CD14-positive monocyte (primary cell): ENCODE measurements at regions of chr3 and their contacts with region 1.

Region 1: DNA sequence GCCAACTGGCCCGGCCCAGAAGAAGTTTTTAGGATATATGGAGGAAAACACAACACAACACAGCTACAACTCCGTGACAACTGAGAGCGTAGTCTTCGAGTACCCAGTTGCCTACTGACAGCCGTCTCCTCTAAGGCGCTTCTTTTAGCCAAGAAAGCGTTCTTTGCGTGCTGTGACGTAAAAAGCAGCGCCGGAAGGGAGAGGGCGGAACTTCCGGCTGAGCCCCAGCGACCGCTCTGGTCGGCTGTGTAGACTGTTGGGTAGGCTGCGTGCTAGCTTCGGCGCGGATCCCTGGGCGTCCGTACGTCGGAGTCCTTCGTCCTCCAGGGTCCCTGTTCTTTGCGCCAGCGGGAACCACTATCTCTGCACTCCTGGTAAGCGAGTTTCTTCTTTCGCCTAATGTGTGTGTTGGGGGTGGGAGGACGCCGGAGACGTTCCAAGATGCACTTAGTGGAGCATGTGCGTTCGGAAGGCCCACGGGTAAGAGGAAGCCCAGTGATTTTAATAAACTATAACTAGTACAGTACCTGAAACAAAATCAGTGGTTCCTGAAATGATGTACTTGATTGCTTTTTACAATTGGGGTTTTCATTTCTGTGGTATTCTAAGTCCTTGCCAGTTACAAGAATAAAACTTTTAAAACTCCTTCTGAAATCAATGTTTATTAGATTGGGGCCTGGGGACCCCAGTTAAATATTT is at the start of gene TRMT10C:
- DNase-seq: peak; percentile 91 to 94 (median 92)
- H3K4me3 ChIP-seq: peak within 1 kb of the TSS; percentile 77 to 91 (median 81)
- H3K4me3 Mint-ChIP-seq: peak within 1 kb of the TSS; percentile 93 to 97
- H3K27ac ChIP-seq: peak within 1 kb of the TSS; percentile 81 to 91
- H3K27ac Mint-ChIP-seq: peak within 1 kb of the TSS; percentile 93 to 99 (median 97)
- H3K4me1 ChIP-seq: peaks cover 24 to 29% of the 10 kb centered on the region in 2 donors
- H3K4me1 Mint-ChIP-seq: peaks cover 27% of the 10 kb centered on the region
- H3K27me3 ChIP-seq: peaks cover 4 to 7% of the 10 kb centered on the region in 2 donors
- H3K27me3 Mint-ChIP-seq: peaks cover 4 to 17% (median 9%) of the 10 kb centered on the region in 3 donors
- CTCF ChIP-seq: no peak
- polyA plus RNA-seq, gene TRMT10C: 4.1 to 21.0 (median 14.6) TPM

Region 2: GRCh38 chr3:101512646-101513418 is 48.9 kb before region 1 on chr3 and contains the start of gene SENP7:
- intact Hi-C with region 1: loop called (anchors 5 to 10 kb)
- DNase-seq: peak; percentile 66 to 82 (median 79)
- H3K4me3 ChIP-seq: peak within 1 kb of the TSS; percentile 70 to 96 (median 84)
- H3K4me3 Mint-ChIP-seq: peak within 1 kb of the TSS; percentile 99 to 100
- H3K27ac ChIP-seq: peak within 1 kb of the TSS; percentile 71 to 98
- H3K27ac Mint-ChIP-seq: peak within 1 kb of the TSS; percentile 95 to 100 (median 99)
- H3K4me1 ChIP-seq: peaks cover 15 to 20% of the 10 kb centered on the region in 2 donors
- H3K4me1 Mint-ChIP-seq: peaks cover 23% of the 10 kb centered on the region
- H3K27me3 ChIP-seq: no peaks in the 10 kb centered on the region
- H3K27me3 Mint-ChIP-seq: peaks cover 0 to 3% (median 2%) of the 10 kb centered on the region in 3 donors
- CTCF ChIP-seq: no peak
- polyA plus RNA-seq, gene SENP7: 1.6 to 12.4 (median 3.8) TPM

Region 3: DNA sequence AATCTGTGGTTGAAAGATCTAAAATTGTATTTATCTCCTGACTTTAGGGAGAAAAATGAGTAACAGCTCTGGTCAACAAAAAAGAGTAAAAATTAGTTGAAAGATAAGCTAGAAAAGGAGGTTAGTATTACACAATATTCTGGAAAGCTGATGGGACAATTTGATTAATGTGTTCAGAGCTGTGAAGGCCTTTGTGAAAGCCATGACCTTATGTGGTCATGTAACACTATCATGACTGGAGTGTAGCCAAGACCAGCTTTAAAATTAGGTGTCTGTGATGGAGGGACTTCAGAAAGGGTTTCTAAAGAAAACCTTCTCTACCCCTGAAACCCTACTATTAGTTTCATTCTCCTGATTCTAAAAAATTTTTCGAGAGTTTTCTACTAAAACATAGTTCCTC is 414.7 kb after region 1 on chr3:
- intact Hi-C with region 1: no loop called
- DNase-seq: no peak
- H3K4me3 ChIP-seq: no peak overlapping the region
- H3K4me3 Mint-ChIP-seq: no peak overlapping the region
- H3K27ac ChIP-seq: peak overlapping the region in 1 of 2 donors; percentile 14
- H3K27ac Mint-ChIP-seq: peak overlapping the region in 1 of 7 donors; percentile 54
- H3K4me1 ChIP-seq: peaks cover 6 to 11% of the 10 kb centered on the region in 2 donors
- H3K4me1 Mint-ChIP-seq: peaks cover 16% of the 10 kb centered on the region
- H3K27me3 ChIP-seq: no peaks in the 10 kb centered on the region
- H3K27me3 Mint-ChIP-seq: no peaks in the 10 kb centered on the region
- CTCF ChIP-seq: no peak